ENCODE measurements at regions of chr18 and their contacts with region 1.

Region 1: GRCh38 chr18:23231340-23232021 is 96.2 kb downstream of the CABLES1 start:
- DNase-seq: peak; percentile 91
- H3K4me3 Mint-ChIP-seq: no peak overlapping the region
- H3K27ac Mint-ChIP-seq: peak overlapping the region; percentile 94
- H3K4me1 Mint-ChIP-seq: peaks cover 45% of the 10 kb centered on the region
- H3K27me3 Mint-ChIP-seq: no peaks in the 10 kb centered on the region

Region 2: DNA sequence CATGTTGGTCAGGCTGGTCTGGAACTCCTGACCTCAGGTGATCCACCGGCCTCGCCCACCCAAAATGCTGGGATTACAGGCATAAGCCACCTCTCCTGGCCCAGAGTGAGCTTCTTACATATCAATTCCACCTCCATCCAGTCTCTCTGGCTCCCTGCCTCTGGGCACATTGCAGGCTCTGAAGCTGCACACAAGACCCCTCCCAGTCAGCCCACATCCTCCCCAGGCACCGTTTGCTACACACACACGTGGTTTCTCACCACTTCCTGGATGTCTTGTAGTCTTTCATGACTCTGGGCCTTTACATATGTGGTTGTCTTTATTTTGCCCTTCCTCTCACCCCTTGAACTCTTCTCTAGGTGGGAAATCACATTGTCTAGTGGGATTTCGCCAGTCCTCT is 160.2 kb before region 1 on chr18:
- CTCF ChIA-PET with region 1: no interaction called
- intact Hi-C with region 1: loop called (anchors 1 kb)
- DNase-seq: peak; percentile 90
- H3K4me3 Mint-ChIP-seq: peak overlapping the region; percentile 20
- H3K27ac Mint-ChIP-seq: peak overlapping the region; percentile 67
- H3K4me1 Mint-ChIP-seq: peaks cover 56% of the 10 kb centered on the region
- H3K27me3 Mint-ChIP-seq: no peaks in the 10 kb centered on the region

Region 3: GRCh38 chr18:23207191-23207955 is 24.1 kb before region 1 on chr18:
- CTCF ChIA-PET with region 1: interaction called, 4 read pairs
- intact Hi-C with region 1: loop called (anchors 1 kb)
- DNase-seq: no peak
- H3K4me3 Mint-ChIP-seq: no peak overlapping the region
- H3K27ac Mint-ChIP-seq: no peak overlapping the region
- H3K4me1 Mint-ChIP-seq: peaks cover 17% of the 10 kb centered on the region
- H3K27me3 Mint-ChIP-seq: peaks cover 9% of the 10 kb centered on the region

Region 4: GRCh38 chr18:23283916-23284430 is 52.5 kb after region 1 on chr18:
- CTCF ChIA-PET with region 1: no interaction called
- intact Hi-C with region 1: loop called (anchors 1 kb)
- DNase-seq: peak; percentile 66
- H3K4me3 Mint-ChIP-seq: no peak overlapping the region
- H3K27ac Mint-ChIP-seq: peak overlapping the region; percentile 75
- H3K4me1 Mint-ChIP-seq: peaks cover 16% of the 10 kb centered on the region
- H3K27me3 Mint-ChIP-seq: no peaks in the 10 kb centered on the region

Region 5: DNA sequence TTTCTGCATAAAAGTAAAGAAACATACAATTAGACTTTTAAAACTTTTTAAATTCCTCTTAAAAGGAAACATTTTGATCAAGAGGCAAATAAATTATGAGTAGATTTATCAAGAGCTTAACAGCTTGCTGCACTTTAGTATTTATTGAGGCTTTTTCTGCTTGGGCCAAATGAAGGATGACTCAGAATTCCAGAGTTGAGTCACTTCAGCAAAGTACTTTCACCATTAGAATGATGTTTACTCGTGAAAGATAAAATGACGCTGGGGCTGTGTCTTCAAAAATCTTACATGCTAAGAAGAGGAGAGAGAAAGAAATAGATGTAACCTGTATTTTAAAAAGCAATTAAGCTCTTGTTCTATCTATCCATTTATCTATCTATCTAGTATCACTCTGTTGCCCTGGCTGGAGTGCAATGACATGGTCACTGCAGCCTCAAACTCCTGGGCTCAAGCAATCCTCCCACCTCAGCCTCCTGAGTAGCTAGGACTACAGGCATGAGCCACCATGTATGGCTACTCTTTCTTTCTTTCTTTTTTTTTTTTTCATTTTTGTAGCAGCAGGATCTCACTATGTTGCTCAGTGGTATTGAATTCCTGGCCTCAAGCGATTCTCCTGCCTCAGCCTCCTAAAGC is 146.3 kb after region 1 on chr18:
- CTCF ChIA-PET with region 1: no interaction called
- intact Hi-C with region 1: loop called (anchors 1 kb)
- DNase-seq: peak; percentile 20
- H3K4me3 Mint-ChIP-seq: no peak overlapping the region
- H3K27ac Mint-ChIP-seq: peak overlapping the region; percentile 53
- H3K4me1 Mint-ChIP-seq: peaks cover 16% of the 10 kb centered on the region
- H3K27me3 Mint-ChIP-seq: no peaks in the 10 kb centered on the region

Region 6: DNA sequence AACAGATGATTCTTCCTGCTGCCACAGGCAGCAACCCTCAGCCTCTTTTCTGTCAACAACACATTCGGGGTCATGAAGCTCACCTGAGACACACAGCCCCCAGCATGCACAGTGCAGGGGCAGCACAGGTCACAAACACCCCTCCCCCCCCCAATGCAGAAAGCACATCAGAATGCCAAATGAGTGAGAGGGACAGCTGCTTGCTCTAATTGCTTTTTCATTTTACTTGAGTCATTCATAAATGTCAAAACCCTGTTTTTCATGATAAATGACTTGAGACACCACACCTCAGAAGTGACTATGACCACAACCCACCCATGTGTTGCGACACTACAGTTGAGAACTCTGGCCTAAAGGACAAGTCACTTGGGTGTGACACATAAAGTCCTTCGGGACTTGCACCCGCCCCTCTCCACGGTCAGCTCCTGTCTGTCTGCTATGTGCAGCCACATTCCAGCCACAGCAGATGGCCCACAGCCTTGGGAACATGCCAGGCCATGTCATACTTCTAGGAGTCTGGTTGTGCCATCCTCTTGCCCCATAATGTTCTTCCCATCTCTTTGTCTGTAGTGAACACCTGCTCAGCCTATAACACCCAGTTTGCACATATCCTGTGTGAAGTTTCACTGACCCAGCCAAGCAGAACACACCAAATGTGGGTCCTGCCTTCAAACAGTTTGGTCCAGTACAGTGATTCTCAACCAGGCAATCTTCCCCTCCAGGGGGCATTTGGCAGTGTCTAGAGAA is 191.4 kb after region 1 on chr18:
- CTCF ChIA-PET with region 1: no interaction called
- intact Hi-C with region 1: no loop called
- DNase-seq: no peak
- H3K4me3 Mint-ChIP-seq: no peak overlapping the region
- H3K27ac Mint-ChIP-seq: no peak overlapping the region
- H3K4me1 Mint-ChIP-seq: no peaks in the 10 kb centered on the region
- H3K27me3 Mint-ChIP-seq: no peaks in the 10 kb centered on the region

Region 7: DNA sequence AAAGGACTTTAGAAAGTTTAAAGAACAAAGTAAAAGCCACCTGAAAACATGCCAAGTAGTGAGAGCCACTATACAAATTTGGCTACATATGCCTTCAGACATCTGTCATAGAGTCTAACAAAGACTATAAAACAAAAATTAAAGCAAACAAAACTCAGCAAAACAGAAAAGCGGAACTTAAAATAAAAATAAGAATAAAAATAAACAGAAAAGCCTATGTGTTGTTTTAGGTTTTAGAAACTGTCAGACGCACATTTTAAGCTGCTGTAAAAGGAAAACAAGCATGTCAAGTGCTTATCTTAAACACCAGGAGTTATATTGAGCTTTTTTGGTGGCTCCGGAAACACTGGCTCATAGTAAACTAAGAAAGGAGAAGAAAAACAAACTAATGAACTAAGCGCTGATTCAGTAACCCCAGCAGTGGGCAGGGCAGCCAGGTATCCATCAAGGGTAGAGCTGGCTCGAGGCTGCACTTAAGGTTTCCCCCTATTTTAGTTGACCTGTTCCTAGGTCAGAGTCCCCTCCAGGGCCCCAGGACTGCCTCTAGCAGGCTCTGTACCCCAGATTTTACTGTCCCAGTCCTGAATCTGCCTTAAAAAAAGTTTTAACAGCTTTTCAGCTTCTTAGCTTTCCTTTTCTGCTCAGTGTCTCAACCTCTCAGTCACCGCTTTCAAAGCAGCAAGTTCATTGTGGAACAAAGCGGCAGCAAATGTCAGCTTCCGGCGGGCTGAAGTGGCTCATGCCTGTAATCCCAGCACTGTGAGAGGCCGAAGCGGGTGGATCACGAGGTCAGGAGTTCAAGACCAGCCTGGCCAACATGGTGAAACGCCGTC is 256.5 kb after region 1 on chr18:
- CTCF ChIA-PET with region 1: no interaction called
- intact Hi-C with region 1: loop called (anchors 5 kb)
- DNase-seq: peak; percentile 84
- H3K4me3 Mint-ChIP-seq: peak overlapping the region; percentile 57
- H3K27ac Mint-ChIP-seq: peak overlapping the region; percentile 86
- H3K4me1 Mint-ChIP-seq: peaks cover 19% of the 10 kb centered on the region
- H3K27me3 Mint-ChIP-seq: no peaks in the 10 kb centered on the region

Measured in activated naive CD4-positive, alpha-beta T cell treated with anti-CD3 and anti-CD28 coated beads for 36 hours (primary cell).